PC-9 (cell line): ENCODE measurements at regions of chr2 and their contacts with region 1.

Region 1: DNA sequence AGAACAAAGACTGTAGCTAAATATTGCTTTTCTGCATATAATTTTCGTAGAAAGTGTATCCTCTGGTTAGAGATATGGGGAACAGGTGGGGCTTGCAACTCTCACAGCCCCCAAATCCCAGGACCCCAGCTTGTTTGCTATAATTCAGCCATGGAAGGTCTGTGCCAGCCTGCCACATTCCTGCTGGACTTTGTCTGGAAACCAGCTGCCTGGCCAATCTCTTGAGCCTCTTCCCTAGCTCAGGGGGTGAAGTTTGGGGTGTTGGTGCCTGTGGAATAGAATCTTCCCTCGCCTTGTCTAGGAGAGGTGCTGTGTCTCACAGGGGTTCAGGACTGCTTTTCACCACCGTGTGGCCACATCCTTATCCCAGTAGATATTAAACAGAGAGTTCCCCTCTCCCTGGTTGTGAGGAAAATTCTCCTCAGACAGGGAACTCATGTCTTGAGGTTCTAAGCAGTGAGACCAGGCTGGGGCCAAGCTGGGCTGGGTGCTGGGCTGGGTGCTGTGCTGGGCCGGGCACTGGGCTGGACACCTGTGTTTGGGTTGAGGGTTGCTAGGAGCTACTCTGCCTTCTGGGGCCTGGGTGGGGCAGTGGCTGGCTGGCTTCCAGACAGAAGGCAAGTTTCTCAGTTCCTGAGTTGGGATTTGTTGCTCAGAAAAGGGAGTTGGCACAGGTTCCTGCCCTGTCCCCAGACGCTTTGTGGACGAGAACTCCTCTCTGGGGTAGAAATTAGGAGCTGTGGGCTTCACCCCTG is 12.3 kb downstream of the TOGARAM2 start:
- DNase-seq: peak; percentile 66 to 88
- H3K4me3 ChIP-seq: no peak overlapping the region
- H3K27ac ChIP-seq: no peak overlapping the region
- H3K4me1 ChIP-seq: peaks cover 13% of the 10 kb centered on the region
- H3K27me3 ChIP-seq: no peaks in the 10 kb centered on the region
- CTCF ChIP-seq: 0 out of 2 replicates have a peak, but pooled peaks have one; percentile 7

Region 2: DNA sequence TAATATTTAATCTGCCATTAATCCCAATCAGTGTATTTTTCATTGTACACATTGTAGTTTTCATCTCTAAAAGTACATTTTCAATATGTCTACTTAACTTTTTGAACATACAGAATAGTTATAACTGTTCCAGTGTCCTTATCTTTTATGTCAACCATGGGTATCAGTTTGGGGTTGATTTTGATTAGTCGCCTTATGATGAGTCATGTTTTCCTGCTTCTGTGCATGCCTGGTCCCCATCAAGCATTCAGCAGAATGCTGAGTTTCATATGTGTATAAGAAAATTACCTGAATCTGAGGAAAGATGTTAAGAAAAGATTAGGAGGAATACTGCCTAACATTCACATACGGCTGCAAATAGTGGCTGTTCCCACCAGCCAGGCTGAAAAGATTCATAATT is 165.0 kb before region 1 on chr2:
- CTCF ChIA-PET with region 1: no interaction called
- POLR2A ChIA-PET with region 1: no interaction called
- intact Hi-C with region 1: no loop called
- DNase-seq: no peak
- H3K4me3 ChIP-seq: no peak overlapping the region
- H3K27ac ChIP-seq: no peak overlapping the region
- H3K4me1 ChIP-seq: no peaks in the 10 kb centered on the region
- H3K27me3 ChIP-seq: no peaks in the 10 kb centered on the region
- CTCF ChIP-seq: no peak

Region 3: GRCh38 chr2:28976584-28976983 is 16.8 kb before region 1 on chr2:
- CTCF ChIA-PET with region 1: no interaction called
- POLR2A ChIA-PET with region 1: no interaction called
- intact Hi-C with region 1: loop called (anchors 1 kb)
- DNase-seq: peak; percentile 92 to 99
- H3K4me3 ChIP-seq: no peak overlapping the region
- H3K27ac ChIP-seq: peak overlapping the region; percentile 56
- H3K4me1 ChIP-seq: peaks cover 39% of the 10 kb centered on the region
- H3K27me3 ChIP-seq: no peaks in the 10 kb centered on the region
- CTCF ChIP-seq: no peak

Region 4: DNA sequence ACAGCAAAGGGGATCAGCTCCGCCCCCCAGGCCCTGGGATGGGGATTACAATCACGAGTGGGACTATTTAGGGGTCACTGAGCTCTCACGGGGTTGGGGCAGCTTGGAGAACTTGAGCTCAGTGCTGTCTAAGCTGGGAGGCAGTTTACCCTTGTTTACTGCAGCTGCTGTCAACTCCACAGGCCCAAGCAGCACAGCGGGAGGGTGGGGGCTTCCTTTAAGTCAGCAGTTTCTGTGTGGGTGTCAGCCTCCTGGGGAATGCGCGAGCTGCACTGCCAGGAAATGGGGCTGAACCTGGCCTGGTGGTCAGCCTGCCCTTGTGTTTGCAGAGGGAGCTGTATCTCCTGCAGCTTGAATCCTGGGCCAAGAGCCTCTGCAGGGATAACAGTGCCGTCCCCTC is 17.6 kb after region 1 on chr2:
- CTCF ChIA-PET with region 1: interaction called, 10 read pairs
- POLR2A ChIA-PET with region 1: no interaction called
- intact Hi-C with region 1: no loop called
- DNase-seq: no peak
- H3K4me3 ChIP-seq: no peak overlapping the region
- H3K27ac ChIP-seq: no peak overlapping the region
- H3K4me1 ChIP-seq: no peaks in the 10 kb centered on the region
- H3K27me3 ChIP-seq: no peaks in the 10 kb centered on the region
- CTCF ChIP-seq: no peak